ENCODE measurements at regions of chr14 and their contacts with region 1.

Region 1: GRCh38 chr14:93892923-93893558 is 34.1 kb upstream of the FAM181A start:
- DNase-seq: peak; percentile 38
- H3K4me3 Mint-ChIP-seq: no peak overlapping the region
- H3K27ac Mint-ChIP-seq: no peak overlapping the region
- H3K4me1 Mint-ChIP-seq: no peaks in the 10 kb centered on the region
- H3K27me3 Mint-ChIP-seq: peaks cover 6% of the 10 kb centered on the region

Region 2: GRCh38 chr14:93655078-93655750 is 237.8 kb before region 1 on chr14:
- intact Hi-C with region 1: loop called (anchors 1 kb)
- DNase-seq: no peak
- H3K4me3 Mint-ChIP-seq: no peak overlapping the region
- H3K27ac Mint-ChIP-seq: no peak overlapping the region
- H3K4me1 Mint-ChIP-seq: no peaks in the 10 kb centered on the region
- H3K27me3 Mint-ChIP-seq: peaks cover 12% of the 10 kb centered on the region

Region 3: GRCh38 chr14:93870377-93870776 is 22.7 kb before region 1 on chr14:
- intact Hi-C with region 1: no loop called
- DNase-seq: no peak
- H3K4me3 Mint-ChIP-seq: no peak overlapping the region
- H3K27ac Mint-ChIP-seq: no peak overlapping the region
- H3K4me1 Mint-ChIP-seq: no peaks in the 10 kb centered on the region
- H3K27me3 Mint-ChIP-seq: peaks cover 14% of the 10 kb centered on the region

Measured in activated T-helper 2 cell treated with anti-CD3 and anti-CD28 coated beads, Interferon-gamma antibody, Interleukin-2, Interleukin-4, amounts not matched to agents 10 μg/mL and 5 μg/mL and 100 μg/mL, durations not matched to agents 14 hours and 24 hours and 36 hours (primary cell).